Heart left ventricle (tissue), 16 donors: ENCODE measurements at regions of chr14 and their contacts with region 1.

Region 1: GRCh38 chr14:88929656-88930425 is 105.4 kb downstream of the TTC8 start:
- DNase-seq: no peak
- ATAC-seq: no peak
- H3K4me3 ChIP-seq: no peak overlapping the region
- H3K27ac ChIP-seq: no peak overlapping the region
- H3K4me1 ChIP-seq: no peaks in the 10 kb centered on the region
- H3K27me3 ChIP-seq: no peaks in the 10 kb centered on the region
- CTCF ChIP-seq: no peak
- POLR2A ChIP-seq: no peak

Region 2: GRCh38 chr14:88908216-88908615 is 21.6 kb before region 1 on chr14:
- intact Hi-C with region 1: loop called in 1 of 10 experiments (anchors 1 kb)
- DNase-seq: no peak
- ATAC-seq: no peak
- H3K4me3 ChIP-seq: no peak overlapping the region
- H3K27ac ChIP-seq: no peak overlapping the region
- H3K4me1 ChIP-seq: no peaks in the 10 kb centered on the region
- H3K27me3 ChIP-seq: no peaks in the 10 kb centered on the region
- CTCF ChIP-seq: no peak
- POLR2A ChIP-seq: no peak